Dorsolateral prefrontal cortex (tissue), 120 donors: ENCODE measurements at regions of chr1 and their contacts with region 1.

Region 1: DNA sequence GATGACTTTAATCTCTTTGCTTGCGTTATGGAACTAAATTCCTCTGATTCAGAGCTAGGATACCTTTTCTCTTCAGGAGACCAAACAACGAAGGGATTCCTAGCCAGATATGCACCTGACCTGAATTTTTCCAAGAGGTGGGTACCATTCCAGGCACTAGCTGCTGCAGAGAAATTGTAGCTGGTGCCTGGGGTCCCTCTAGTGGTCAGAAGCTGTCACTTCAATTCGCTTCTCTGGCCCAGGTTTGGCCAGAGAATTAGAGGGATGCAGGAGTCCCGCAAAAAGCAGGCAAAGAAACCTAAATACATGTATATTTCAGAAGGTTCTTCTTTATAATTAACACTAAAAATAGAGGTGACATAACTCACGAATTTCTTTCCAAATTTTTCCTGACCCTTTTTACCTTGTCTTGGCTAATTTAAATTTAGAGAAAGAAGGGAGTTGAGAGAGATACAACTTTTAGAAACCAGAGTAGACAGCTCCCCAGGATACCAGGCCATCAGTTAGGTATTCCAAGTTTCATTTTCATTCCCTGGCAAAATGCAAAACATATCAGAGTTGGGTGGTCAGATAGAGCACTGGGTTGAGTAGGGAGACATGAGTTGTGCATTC is 9.6 kb downstream of the ACKR1 start:
- DNase-seq: peak in 6 of 10 donors; percentile 42 to 77 (median 56)
- H3K4me3 ChIP-seq: no peak overlapping the region
- H3K27ac ChIP-seq: no peak overlapping the region
- H3K27me3 ChIP-seq: peaks cover 0 to 31% (median 0%) of the 10 kb centered on the region in 45 donors
- CTCF ChIP-seq: peak; percentile 72 to 97 (median 91)

Region 2: GRCh38 chr1:159132271-159132881 is 81.9 kb before region 1 on chr1:
- intact Hi-C with region 1: loop called (anchors 2 kb)
- DNase-seq: peak; percentile 47 to 68 (median 56)
- H3K4me3 ChIP-seq: peak overlapping the region in 6 of 59 donors; percentile 4 to 26 (median 18)
- H3K27ac ChIP-seq: no peak overlapping the region
- H3K27me3 ChIP-seq: peaks cover 0 to 8% (median 0%) of the 10 kb centered on the region in 45 donors
- CTCF ChIP-seq: peak; percentile 68 to 93 (median 85)

Region 3: DNA sequence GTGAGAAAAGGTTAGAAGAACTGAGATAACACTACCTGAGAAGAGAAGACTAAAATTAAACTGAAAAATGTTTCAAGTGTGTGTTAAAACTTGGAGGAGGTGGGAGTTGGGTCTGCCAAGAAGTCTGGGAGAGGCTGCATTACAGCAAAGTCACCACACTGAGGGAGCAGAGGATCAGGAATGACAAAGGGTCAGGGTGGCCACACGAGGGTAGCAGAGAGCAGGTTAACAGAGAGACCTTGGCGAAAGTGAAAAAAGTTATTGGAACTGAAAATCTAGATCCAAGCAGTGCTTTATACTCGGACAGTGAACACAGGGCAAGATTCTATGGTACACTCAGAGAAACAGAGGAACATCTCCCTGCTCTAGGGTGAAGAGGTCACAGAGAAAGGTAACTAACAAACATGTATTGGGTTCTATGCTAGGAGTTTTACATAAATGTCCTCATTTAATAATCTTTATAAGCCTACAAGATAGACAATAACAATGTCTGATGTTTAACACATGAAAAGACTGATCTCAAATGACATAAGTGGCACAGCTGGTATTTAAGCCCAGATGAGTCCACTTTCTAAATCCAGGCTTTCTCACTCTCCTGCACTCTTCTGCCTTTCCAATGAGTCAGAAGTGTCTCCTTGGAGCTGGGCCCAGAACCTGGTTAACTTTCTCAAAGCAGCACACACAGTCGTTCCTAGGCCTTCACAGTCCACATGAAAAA is 53.1 kb before region 1 on chr1:
- intact Hi-C with region 1: loop called (anchors 1 to 2 kb)
- DNase-seq: peak; percentile 43 to 80 (median 75)
- H3K4me3 ChIP-seq: no peak overlapping the region
- H3K27ac ChIP-seq: peak overlapping the region in 8 of 59 donors; percentile 10 to 76 (median 59)
- H3K27me3 ChIP-seq: peaks cover 0 to 12% (median 0%) of the 10 kb centered on the region in 45 donors
- CTCF ChIP-seq: peak; percentile 74 to 100 (median 98)

Region 4: DNA sequence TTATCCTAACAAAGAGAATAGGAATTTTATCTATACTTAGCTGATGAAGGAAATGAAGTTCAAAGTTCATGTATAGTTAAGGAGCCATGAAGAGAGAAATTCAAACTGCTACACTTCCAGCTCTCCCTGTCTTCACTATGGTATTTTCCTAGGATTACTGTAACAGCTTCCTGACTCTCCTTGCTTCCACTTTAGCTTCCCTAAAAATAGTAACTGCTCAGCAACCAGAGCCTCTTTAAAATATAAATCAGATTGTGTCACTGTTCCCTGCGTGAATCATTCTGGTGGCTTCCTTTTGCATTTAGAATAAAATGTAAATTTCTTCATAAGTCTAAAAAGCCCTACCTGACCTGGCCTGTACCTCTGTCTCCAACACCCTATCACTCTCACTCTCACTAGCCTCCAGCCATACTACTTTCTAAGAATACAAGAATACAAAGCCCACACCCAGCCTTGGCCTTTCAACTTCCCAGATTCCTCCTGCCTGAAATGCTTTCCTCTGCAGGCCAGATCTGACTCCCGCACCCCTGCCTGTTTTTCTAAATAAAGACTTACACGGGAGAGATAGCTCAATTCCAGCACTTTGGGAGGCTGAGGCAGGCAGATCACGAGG is 255.8 kb after region 1 on chr1:
- intact Hi-C with region 1: no loop called
- DNase-seq: no peak
- H3K4me3 ChIP-seq: no peak overlapping the region
- H3K27ac ChIP-seq: no peak overlapping the region
- H3K27me3 ChIP-seq: no peaks in the 10 kb centered on the region
- CTCF ChIP-seq: no peak

Region 5: DNA sequence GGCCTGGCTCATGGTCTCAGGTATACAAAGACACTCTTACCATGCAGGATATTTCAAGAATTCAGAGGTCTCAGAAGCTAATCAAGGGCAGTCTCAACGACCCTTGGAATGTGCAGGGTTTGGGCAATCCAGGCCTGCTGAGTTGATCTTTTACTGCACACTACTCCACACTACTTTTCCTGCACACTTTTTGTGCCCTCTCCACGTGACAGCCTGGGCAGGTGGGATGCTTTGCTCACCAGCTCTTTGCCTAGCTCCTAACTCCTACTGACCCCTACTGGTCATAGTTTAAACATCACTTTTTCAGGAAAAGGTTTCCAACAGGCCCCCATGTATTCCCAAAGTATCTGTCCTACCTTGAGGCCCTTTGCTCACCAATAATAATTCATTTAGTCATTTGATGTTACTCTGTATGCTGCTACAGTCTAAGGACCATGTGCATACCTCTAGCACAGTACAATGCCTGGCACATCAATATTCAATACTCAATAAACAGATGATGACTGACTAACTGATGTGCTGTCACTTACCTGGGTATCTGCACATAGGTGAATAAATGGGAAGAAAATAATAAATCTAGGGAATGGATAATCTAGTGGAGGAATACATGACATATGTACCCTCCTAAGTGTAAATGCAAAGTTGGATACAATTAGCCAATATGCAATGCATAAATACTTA is 576.1 kb after region 1 on chr1:
- intact Hi-C with region 1: loop called in 1 of 2 experiments (anchors 5 kb)
- DNase-seq: no peak
- H3K4me3 ChIP-seq: no peak overlapping the region
- H3K27ac ChIP-seq: no peak overlapping the region
- H3K27me3 ChIP-seq: no peaks in the 10 kb centered on the region
- CTCF ChIP-seq: peak in 54 of 56 donors; percentile 28 to 74 (median 57)

Region 6: DNA sequence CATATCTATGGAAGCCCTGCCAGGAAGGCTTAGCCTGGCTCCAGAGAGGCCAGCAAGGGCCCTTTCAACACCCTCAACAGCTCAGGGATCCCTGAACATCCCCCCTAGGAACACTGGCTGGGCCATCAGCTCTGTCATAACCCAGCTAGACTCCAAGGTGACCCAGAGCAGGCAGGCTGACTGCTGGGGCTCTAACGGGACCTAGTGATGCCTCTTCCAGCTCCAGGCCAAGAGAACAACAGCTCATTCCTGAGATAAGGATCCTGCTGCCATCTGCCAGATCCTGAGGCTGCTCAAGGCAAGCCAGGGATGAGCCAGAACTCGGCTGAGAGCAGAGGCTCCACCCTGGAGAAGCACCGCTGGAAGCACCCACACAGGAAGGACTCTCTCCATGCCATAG is 646.2 kb after region 1 on chr1:
- intact Hi-C with region 1: no loop called
- DNase-seq: no peak
- H3K4me3 ChIP-seq: no peak overlapping the region
- H3K27ac ChIP-seq: no peak overlapping the region
- H3K27me3 ChIP-seq: peaks cover 0 to 3% (median 0%) of the 10 kb centered on the region in 45 donors
- CTCF ChIP-seq: no peak